Left ventricle myocardium inferior (tissue), 1 donor: ENCODE measurements at regions of chr4 and their contacts with region 1.

Region 1: GRCh38 chr4:26916195-26916594 is 55.6 kb downstream of the STIM2 start:
- DNase-seq: no peak
- H3K4me3 ChIP-seq: no peak overlapping the region
- H3K27ac ChIP-seq: no peak overlapping the region
- H3K4me1 ChIP-seq: peaks cover 17% of the 10 kb centered on the region
- H3K27me3 ChIP-seq: no peaks in the 10 kb centered on the region
- CTCF ChIP-seq: no peak

Region 2: DNA sequence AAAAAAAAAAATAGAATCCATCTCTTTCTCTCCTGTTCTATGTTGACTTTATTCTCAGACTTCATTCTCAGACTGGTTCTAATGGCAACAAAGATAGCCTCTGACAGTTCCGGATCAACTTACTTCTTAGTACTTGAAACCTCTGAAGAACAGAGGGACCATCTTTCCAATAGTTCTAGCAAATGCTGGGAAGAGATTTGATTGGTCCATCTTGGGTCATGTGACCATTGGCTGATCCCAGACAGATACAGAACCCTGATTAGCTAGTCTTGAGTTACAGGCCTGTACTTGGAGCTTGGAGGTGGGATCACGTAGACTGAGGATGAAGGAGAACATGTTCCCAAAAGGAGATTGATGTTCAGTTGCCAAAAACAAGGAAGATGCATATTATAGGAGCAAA is 122.5 kb before region 1 on chr4:
- intact Hi-C with region 1: no loop called
- DNase-seq: no peak
- H3K4me3 ChIP-seq: no peak overlapping the region
- H3K27ac ChIP-seq: no peak overlapping the region
- H3K4me1 ChIP-seq: peaks cover 2% of the 10 kb centered on the region
- H3K27me3 ChIP-seq: no peaks in the 10 kb centered on the region
- CTCF ChIP-seq: no peak

Region 3: DNA sequence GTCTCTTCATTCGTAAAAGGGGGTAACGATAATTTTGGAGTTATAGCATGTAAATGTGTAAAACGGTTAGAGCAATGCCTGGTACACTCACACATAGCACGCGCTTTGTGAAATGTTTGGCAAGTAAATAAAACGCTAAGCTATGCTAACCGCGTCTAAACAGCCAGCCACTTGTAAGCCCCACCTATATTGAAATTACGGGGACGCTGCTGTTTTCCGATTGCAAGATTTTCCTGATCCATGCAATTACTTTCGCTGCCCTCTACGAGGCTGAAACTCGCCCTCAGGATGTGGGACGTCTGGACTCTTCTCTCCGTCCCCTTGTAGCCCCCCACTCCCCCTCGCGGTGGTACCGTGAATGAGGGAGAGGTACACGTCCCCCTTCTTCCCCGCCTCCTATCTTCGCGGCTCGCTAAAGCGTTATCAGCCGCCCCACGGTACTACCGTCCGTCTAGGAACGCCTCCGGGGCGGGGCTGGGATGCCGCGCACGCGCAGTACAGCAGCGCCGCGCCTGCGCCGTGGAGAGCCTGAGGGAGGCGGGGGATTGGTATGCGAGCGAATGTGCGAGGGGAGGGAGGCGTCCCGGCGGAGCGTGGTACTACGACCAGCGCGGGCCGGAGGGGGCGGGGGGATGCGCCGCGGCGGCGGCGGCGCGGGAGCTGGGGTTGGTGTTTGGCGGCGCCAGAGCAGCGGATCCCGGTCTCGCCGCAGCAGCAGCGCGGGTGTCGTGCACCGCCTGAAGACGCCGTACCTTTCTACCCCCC is 55.9 kb before region 1 on chr4 and contains the start of gene STIM2:
- intact Hi-C with region 1: loop called (anchors 10 kb)
- DNase-seq: peak; percentile 96
- H3K4me3 ChIP-seq: peak within 1 kb of the TSS; percentile 90
- H3K27ac ChIP-seq: peak within 1 kb of the TSS; percentile 97
- H3K4me1 ChIP-seq: peaks cover 77% of the 10 kb centered on the region
- H3K27me3 ChIP-seq: no peaks in the 10 kb centered on the region
- CTCF ChIP-seq: peak; percentile 52
- total RNA-seq, gene STIM2: 12.2 TPM

Region 4: DNA sequence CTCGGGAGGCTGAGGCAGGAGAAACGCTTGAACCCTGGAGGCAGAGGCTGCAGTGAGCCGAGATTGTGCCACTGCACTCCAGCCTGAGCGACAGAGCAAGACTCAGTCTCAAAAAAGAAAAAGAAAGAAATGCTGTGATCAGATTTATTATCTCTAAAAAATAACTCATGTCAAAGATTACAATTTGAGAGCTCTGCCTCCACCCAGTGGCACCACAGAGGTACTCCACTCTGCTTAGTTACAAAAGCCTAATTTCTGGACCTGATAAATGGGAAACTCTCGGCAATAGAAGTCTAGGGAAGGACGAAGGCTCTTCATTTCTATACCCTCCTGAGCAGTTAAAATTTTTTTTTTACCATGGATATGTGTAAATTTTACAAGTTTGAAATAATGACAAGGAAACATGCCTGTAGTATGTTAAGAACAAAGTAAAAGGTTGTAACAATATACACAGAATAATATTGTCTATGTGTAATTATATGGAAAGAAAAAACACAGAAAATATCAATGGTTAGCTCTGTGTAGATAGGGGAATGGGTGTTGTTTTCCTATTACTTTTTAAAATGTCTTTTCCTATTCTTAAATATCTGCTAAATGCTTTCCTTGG is 94.2 kb after region 1 on chr4:
- intact Hi-C with region 1: no loop called
- DNase-seq: peak; percentile 22
- H3K4me3 ChIP-seq: no peak overlapping the region
- H3K27ac ChIP-seq: no peak overlapping the region
- H3K4me1 ChIP-seq: peaks cover 10% of the 10 kb centered on the region
- H3K27me3 ChIP-seq: no peaks in the 10 kb centered on the region
- CTCF ChIP-seq: peak; percentile 97